Endothelial cell of umbilical vein (primary cell): ENCODE measurements at regions of chr5 and their contacts with region 1.

Region 1: GRCh38 chr5:142713121-142713706 is 27.3 kb upstream of the FGF1 start:
- DNase-seq: peak; percentile 90
- H3K4me3 ChIP-seq: peak overlapping the region in 2 of 3 experiments; percentile 39 to 44
- H3K27ac ChIP-seq: peak overlapping the region; percentile 43
- H3K4me1 ChIP-seq: peaks cover 11% of the 10 kb centered on the region
- H3K27me3 ChIP-seq: peaks cover 0 to 5% of the 10 kb centered on the region in 2 experiments
- CTCF ChIP-seq: peak; percentile 83 to 98
- POLR2A ChIP-seq: no peak

Region 2: GRCh38 chr5:142655339-142656267 is 57.6 kb before region 1 on chr5:
- CTCF ChIA-PET with region 1: interaction called, 80 read pairs
- POLR2A ChIA-PET with region 1: no interaction called
- dilution Hi-C with region 1: no loop called
- intact Hi-C with region 1: loop called (anchors 1 kb)
- DNase-seq: peak; percentile 84
- H3K4me3 ChIP-seq: no peak overlapping the region
- H3K27ac ChIP-seq: no peak overlapping the region
- H3K4me1 ChIP-seq: no peaks in the 10 kb centered on the region
- H3K27me3 ChIP-seq: peaks cover 2 to 14% of the 10 kb centered on the region in 2 experiments
- CTCF ChIP-seq: peak; percentile 96 to 98
- POLR2A ChIP-seq: no peak

Region 3: DNA sequence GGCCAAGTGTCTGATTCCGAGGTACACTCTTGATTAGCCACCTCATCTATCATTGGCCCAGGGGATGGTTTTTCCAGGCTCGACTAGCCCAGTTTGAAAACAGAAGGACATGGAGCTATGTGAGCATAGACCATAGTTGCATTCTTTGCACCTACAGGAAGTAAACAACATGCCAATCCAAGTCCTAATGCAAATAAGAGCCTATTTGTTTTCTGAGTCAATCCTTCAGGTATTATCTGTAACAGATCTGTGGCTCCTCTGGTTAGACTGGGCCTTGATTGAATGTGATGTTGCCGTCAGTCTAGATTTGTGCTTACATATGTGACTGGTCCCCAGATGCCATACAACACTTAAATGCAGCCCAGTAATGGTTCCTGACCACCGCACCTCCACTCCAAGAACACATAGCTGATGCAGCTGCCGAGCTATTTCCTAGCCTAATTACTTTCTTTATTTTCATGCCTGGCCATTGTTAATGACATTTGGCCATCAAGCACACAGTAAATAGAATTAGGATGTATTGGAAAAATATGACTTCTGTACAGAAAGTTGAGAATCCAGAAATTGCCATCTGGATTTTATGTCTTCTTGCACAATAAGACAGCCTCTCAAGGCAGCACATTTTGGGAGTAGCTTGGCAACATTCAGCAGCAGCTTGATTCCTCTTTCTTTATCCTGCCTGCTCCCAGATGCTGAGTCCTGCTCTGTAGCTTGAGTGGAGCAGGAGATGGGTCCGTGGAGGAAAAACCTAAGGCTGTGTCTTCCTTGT is 27.4 kb after region 1 on chr5:
- CTCF ChIA-PET with region 1: interaction called, 13 read pairs
- POLR2A ChIA-PET with region 1: no interaction called
- dilution Hi-C with region 1: no loop called
- intact Hi-C with region 1: no loop called
- DNase-seq: no peak
- H3K4me3 ChIP-seq: no peak overlapping the region
- H3K27ac ChIP-seq: no peak overlapping the region
- H3K4me1 ChIP-seq: peaks cover 16% of the 10 kb centered on the region
- H3K27me3 ChIP-seq: peaks cover 0 to 4% of the 10 kb centered on the region in 2 experiments
- CTCF ChIP-seq: no peak
- POLR2A ChIP-seq: no peak

Region 4: DNA sequence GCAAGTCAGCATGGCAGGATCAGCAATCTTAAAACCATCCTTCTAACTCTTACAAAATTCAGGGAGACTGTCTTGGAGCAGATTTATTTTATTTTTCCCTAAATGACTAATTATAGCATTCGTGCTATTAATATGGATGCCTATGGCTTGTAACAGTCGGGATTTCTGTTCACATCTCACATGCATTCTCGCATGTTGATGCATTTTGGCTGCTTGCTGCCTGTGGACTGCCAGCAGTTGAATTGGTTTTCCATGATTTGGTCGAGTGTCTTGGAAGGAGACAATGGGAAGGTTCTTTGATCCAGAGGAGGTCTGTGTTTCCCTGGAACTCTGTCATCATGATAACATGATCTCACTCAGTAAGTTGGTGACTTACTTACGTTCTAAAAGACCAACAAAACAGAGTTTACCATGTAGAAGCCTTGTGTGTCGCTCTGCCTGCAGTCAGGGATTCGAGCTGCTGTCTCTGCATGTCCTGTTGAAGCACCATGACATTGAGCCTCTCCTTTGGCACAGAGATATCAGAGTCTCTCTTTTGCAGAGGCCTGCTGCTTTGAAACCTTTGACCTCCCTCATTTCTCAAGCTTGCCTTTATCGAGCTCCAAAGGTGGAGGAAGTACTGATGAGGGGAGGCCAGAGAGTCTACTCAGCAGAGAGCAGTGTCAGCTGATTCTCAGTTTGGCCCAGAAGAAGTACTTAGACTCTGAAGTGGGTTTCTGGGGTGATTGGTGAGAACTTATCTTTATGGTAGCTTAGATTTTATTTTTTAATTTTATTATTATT is 139.4 kb after region 1 on chr5:
- CTCF ChIA-PET with region 1: interaction called, 12 read pairs
- POLR2A ChIA-PET with region 1: no interaction called
- dilution Hi-C with region 1: no loop called
- intact Hi-C with region 1: no loop called
- DNase-seq: no peak
- H3K4me3 ChIP-seq: no peak overlapping the region
- H3K27ac ChIP-seq: no peak overlapping the region
- H3K4me1 ChIP-seq: peaks cover 20% of the 10 kb centered on the region
- H3K27me3 ChIP-seq: no peaks in the 10 kb centered on the region
- CTCF ChIP-seq: no peak
- POLR2A ChIP-seq: no peak

Region 5: DNA sequence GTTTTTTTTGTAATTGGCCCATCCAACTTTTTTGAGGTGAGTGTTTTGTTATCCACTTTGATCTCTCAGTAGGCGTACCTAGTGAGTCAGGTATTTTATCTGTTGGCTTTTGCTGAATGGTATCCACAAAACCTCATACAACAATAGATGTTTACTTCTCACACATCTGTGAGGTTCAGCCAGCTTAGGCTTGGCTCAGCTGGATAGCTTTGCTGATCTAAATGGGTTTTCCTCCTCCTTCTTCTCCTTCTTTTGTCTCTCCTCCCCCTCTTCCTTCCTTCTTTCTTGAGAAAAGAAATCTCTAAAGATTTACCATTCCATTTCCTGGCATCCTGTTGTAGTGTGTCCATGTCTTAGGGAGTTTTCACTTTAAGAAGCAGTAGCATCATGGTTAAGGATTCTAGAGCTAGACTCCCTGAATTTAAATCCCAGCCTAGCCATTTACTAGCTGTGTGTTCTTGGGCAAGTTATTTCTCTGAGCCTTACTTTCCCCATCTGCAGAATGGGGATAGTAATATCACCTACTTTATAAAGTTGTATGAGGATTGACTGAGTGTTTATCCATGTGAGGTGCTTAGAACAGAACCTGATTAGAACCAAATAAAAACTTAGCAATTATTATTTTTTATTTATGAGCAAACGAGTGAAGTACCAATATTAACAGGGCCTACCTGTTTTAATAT is 183.3 kb after region 1 on chr5:
- CTCF ChIA-PET with region 1: interaction called, 23 read pairs
- POLR2A ChIA-PET with region 1: no interaction called
- dilution Hi-C with region 1: loop called (anchors 25 kb)
- intact Hi-C with region 1: no loop called
- DNase-seq: no peak
- H3K4me3 ChIP-seq: no peak overlapping the region
- H3K27ac ChIP-seq: no peak overlapping the region
- H3K4me1 ChIP-seq: peaks cover 4% of the 10 kb centered on the region
- H3K27me3 ChIP-seq: no peaks in the 10 kb centered on the region
- CTCF ChIP-seq: no peak
- POLR2A ChIP-seq: no peak

Region 6: DNA sequence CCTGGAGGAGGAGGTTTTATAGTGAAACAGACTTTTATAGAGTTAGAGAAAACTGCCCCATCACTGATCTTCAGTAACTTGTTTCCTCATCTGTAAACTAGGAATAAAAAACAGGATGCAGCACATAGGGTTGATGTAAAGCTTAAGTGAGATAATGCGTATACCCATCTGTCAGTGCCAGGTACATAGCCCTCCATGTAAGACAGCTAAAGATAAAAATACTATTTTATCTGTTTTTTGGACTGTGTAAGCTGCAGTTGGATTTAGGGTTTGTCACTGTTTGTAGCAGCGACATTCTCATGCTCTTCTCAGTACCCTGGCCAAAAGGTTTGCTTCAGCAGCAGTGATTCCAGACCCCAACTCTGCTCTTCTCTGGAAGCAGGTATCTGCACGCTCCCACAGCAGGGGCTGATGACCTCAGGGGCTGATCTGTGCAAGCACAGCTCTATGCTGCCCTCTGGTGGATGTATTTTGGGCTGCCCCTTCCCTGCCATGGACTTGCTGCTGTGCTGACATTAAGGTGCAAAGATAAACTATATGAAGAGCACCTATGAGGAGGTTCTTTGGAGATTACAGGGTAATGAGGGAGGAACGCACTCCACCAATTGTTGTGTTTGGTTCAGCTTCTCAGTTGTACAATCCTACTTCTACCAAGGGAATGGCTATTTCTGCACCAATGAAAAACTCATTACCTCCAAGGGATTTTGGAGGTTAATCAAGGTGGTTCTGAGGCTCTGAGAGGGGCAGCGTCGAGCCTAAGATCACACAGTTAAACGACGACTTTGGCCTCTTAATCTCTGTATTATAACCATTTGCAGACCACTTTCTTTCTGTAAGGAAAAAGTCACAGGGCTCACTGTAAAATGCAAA is 1111.9 kb after region 1 on chr5:
- CTCF ChIA-PET with region 1: interaction called, 3 read pairs
- POLR2A ChIA-PET with region 1: no interaction called
- dilution Hi-C with region 1: no loop called
- intact Hi-C with region 1: loop called (anchors 5 kb)
- DNase-seq: peak; percentile 83
- H3K4me3 ChIP-seq: no peak overlapping the region
- H3K27ac ChIP-seq: no peak overlapping the region
- H3K4me1 ChIP-seq: no peaks in the 10 kb centered on the region
- H3K27me3 ChIP-seq: peaks cover 0 to 2% of the 10 kb centered on the region in 2 experiments
- CTCF ChIP-seq: peak; percentile 84
- POLR2A ChIP-seq: no peak